Head of caudate nucleus (tissue), 42 donors: ENCODE measurements at regions of chr9 and their contacts with region 1.

Region 1: DNA sequence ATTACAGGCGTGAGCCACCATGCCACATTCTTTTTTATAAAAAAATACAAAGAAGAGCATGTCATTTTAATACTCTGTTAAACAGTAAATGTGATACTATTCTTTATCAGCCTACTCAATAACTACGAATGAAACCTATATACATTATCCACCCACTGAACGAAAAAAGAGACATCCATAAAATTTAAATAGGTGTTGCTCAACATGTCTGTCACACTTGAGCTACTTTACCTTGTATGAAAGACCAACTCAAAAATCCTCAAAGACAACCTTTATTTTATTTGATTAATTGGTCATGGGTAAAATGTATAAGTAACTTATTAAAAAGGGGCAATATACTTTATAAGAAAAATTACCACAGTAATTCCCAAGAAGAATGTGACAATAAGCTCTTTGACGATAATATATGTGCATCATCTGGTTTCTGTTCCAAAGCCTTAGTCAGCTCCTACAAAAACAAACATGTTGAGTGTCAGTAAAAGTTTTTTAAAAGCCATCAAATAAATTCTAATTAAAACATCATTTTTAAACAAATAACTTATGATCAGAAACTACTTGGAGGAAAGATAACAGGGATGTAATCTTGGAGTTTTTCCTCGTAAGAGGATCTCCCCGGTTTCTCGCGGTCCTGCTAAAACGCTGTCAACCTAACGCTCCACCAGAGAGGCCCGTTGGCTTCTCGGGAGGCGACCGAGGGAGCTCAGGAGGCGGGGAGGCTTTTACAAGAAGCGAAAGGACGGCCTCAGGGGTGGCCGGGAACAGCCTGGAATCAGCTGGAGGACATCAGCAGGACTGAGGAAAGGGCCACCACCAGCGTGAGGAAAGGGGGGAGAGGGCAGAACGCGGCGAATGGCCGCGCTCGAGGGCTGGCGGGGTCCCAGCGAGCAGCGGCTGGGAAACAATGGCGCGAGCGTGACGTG is 13.5 kb upstream of the ANKRD18B start:
- DNase-seq: peak; percentile 41 to 85 (median 65)

Region 2: DNA sequence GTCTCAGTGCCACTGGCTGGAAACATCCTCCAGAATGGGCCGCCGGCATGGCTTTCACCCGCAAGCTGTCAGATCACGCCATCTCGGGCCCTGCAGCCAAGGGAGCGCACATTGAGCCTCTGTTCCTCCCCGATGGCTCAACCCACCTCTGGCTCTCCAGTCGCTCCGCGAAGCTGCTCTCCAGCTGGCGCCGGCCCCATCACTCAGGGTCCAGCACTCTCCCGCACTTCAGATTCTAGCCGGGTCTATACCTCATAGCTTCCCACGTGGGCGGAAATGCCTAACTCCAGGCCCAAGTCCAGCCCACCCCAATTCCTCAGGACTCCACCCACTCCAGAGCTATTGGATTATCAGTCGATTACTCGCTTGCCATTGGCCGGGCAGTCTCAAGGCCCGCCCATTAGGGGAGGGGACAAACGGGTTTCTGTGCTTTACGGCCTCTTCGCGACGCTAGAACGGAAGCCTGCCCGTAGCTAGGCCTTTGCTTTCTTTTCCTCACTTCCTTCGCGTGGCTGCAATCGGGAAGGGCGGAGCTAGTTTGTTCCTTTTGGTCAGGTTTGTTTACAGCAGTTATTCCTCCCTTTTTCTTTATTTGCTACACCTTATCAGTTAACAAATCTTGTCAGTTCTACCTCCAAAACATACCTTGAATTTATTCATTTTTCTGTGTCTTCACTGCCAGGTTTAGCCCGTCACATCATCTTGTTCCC is 36.7 kb before region 1 on chr9 and contains the start of gene NOL6:
- intact Hi-C with region 1: loop called (anchors 5 kb)
- DNase-seq: peak; percentile 91 to 99 (median 98)